ENCODE measurements at regions of chr10 and their contacts with region 1.

Region 1: DNA sequence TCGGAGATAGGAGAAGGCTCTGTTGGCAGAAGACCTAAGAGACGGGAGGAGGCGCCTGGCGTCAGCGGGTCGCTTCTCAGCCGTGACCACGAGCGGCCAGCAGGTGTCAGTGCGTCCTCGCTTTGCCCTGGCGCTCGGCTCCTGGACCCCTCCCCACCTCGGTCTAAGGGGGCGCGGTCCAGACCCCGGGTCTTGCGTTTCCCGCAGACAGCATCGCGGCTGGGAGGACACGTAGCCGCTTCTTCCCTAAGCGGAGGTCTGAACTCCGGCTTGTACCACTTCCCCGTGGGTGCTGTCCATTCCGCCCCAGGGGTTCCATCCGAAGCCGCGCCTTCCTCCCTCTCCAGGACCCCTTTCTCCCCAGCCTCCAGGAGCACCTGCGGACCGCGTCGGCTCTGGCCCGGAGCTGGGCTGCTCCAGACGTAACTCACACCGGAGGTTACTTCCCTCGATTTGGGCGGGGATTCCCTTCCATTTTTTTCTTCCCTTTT is 593 bp upstream of the ADRA2A start:
- DNase-seq: peak; percentile 85
- H3K4me3 ChIP-seq: peak overlapping the region; percentile 80
- H3K27ac ChIP-seq: no peak overlapping the region
- H3K4me1 ChIP-seq: peaks cover 8% of the 10 kb centered on the region
- H3K27me3 ChIP-seq: no peaks in the 10 kb centered on the region; the same call in 1 of the 2 replicates

Region 2: GRCh38 chr10:110300486-110300986 is 775.7 kb before region 1 on chr10:
- in situ Hi-C with region 1: no loop called
- DNase-seq: no peak
- H3K4me3 ChIP-seq: no peak overlapping the region
- H3K27ac ChIP-seq: no peak overlapping the region
- H3K4me1 ChIP-seq: peaks cover 51% of the 10 kb centered on the region
- H3K27me3 ChIP-seq: no peaks in the 10 kb centered on the region

Region 3: GRCh38 chr10:110959379-110960332 is 116.6 kb before region 1 on chr10:
- in situ Hi-C with region 1: no loop called
- DNase-seq: peak; percentile 18
- H3K4me3 ChIP-seq: no peak overlapping the region
- H3K27ac ChIP-seq: no peak overlapping the region
- H3K4me1 ChIP-seq: peaks cover 12% of the 10 kb centered on the region
- H3K27me3 ChIP-seq: no peaks in the 10 kb centered on the region

Region 4: DNA sequence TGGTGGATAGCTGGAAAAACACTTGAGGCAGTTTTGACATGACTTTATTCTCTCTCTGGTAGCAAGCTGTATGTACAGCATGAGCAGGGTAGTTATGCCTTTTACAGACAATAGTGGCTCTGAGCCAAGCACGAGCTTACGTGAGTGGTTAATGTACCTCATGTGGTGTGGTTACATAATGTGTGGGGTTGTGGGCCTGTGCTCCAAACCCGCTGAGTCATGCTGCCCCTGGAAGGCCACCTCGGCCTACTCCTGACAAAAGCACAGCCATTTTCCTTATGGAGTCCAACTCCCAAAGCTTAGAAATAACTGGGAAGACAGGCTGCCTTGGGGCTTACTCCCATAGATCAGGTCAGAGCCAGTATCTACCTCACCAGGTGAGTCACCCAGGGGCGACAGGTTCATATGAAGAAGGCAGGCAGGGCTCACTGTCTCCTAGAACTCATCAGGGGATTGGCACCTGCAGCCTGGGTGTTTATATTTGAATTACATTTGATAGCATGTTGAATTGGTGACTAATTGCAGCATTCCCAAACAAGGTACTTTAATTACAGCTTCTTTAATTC is 405.1 kb after region 1 on chr10:
- in situ Hi-C with region 1: no loop called
- DNase-seq: peak; percentile 25
- H3K4me3 ChIP-seq: no peak overlapping the region
- H3K27ac ChIP-seq: no peak overlapping the region
- H3K4me1 ChIP-seq: peaks cover 34% of the 10 kb centered on the region
- H3K27me3 ChIP-seq: no peaks in the 10 kb centered on the region

Region 5: GRCh38 chr10:111856631-111857030 is 780.4 kb after region 1 on chr10:
- in situ Hi-C with region 1: loop called (anchors 10 kb)
- DNase-seq: peak; percentile 69
- H3K4me3 ChIP-seq: no peak overlapping the region
- H3K27ac ChIP-seq: no peak overlapping the region
- H3K4me1 ChIP-seq: peaks cover 6% of the 10 kb centered on the region; the same call in 1 of the 2 replicates
- H3K27me3 ChIP-seq: no peaks in the 10 kb centered on the region